ENCODE measurements at regions of chr11 and their contacts with region 1.

Region 1: GRCh38 chr11:8813658-8814057 is 97.3 kb upstream of the AKIP1 start:
- DNase-seq: peak; percentile 77
- ATAC-seq: peak; percentile 60

Region 2: DNA sequence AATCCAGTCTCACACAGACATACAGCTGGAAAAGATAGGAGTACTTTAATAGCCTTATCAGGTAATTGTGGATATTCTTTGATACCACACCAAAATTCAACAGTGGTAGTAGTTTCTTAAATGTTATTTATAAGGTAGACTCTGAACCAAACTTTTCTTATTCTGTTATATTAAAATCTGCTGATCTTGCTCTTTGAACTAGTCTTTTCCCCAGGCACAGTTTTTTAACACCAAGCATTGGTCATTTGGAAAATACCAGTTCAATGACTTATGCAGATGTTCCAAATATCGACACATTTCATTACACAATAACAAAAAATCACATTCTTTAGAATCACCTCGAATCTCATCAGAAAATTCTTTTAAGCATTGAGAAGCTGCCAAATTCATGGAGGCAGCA is 138.8 kb before region 1 on chr11:
- intact Hi-C with region 1: no loop called
- DNase-seq: no peak
- ATAC-seq: no peak

Region 3: DNA sequence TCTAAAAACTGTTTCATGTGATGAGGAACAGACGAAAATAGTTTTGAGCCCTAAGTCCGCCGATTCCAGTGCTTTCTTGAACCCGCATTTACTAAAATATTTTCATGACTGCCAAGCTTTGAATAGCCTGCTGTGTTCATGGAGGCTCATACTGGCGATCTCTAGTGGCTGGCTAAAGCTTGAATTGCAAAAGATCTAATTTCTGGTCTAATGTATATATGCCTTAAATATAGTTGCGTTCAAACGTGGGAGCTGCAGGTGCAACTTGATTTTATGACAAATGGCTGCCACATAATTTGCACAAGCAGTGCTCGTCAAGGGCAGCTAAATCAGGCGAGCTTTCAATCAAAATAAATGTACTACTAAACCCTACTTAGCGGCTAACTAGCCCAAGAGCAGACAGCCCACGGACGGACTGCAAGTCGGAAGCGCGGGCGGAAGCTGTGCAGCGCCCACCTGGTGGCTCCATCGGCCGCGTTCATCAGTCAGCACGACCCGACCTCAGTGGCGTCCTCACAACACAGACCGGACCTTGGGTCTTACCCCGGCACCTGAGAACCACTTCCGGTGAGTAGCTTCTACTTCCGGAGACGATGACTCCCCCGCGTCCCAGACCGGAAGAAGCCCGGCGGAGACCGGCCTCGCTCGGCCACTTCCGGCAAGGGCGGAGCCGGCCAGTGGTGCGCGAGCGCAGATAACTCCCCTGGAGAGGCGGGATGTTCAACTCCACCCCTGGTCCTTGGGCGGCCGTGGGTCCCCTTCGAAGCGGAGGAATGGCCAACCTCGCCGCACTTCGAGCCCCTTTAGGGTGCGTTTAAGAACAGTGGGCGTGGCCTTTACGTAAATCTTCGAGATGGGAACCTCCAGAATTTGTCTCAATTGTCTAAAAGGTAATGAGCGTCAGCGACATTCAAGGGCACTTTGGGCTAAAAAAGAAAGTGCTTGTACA is 125.0 kb before region 1 on chr11:
- intact Hi-C with region 1: loop called (anchors 2 kb)
- DNase-seq: peak; percentile 96
- ATAC-seq: peak; percentile 98

Region 4: DNA sequence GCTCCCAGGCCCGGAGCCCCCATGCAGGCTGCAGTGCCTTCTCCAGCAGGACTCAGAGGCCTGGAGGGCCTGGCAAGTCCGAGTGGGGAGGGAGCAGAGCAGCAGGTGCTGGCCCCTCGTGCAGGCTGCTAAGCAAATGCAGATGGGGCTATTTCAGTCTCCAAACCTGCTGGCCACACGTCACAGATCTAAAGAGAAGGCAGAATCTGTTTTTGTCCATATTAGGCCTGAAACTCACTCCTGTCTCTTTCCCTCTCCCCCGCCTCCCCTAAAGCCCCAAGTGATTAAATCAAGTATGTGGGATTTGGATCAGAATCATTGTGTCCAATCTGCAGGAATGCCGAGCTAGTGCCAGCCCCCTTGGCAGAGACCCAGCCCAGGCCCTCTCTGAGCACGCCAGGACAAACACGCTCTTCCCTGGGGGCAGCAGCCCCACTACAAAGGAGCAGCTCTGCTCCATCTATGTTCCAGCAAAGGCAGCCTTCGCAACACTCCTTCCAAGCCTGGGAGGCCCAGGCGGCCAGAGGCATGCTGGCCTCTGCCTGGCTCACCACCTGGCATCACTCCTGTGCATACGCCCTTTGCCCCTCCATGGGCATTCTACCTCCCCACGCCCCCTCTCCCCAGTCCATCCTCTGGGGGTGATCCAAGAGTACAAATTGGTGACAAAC is 104.5 kb before region 1 on chr11:
- intact Hi-C with region 1: loop called (anchors 5 kb)
- DNase-seq: peak; percentile 94
- ATAC-seq: peak; percentile 84

Region 5: DNA sequence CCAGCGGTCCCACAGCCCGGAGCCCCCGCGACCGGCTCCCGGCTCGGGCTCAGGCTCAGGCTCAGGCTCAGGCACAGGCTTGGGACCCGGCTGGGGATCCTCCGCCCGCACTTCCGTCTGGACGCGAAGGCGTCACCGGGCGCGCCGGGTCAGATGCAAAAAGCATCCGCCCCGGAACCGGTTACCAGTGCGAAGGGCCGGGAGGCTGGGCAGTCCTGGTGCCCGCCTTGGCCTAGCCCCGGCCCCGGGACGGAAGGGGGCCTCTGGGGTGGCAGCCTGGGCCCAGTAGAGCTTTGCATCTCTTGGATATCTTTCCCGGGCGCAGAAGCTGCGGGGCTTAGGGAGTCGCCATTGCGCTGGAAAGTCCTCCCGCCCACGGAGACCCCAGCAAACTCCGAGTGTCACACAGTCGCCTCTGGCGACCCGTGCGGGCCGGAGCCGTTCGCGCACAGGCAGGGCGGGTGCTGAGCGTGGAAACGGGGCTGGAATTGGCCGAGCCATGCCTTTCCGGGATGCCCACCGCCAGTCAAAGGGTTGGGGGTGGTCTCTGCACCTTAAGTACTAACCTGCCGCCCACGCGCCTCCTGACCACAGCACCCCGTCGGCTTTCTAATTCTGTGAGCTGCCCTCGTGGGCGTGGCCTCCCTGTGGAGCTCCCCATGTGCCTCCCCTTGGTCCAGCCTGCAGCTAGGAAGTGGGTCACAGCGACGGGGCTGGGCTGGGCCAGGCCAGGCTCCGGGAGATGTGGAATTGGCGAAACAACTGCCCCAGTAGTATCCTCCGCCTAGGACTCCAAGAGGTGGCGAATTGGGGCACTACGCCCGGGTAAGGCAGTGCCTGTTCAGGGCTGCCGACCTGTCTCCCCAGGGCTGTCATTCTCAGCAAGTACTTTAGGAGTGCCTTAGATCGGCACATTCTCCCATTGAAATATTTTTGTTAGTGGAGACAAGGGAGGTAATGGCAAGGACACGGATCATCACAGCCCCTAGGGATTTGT is 151.0 kb after region 1 on chr11 and contains the start of gene TMEM9B:
- intact Hi-C with region 1: loop called (anchors 10 kb)
- DNase-seq: peak; percentile 96
- ATAC-seq: peak; percentile 97
- total RNA-seq, gene TMEM9B: 46.1 TPM